T-cell (primary cell): ENCODE measurements at regions of chr1 and their contacts with region 1.

Region 1: GRCh38 chr1:112849425-112850033 is 106.5 kb downstream of the SLC16A1 start:
- DNase-seq: no peak
- ATAC-seq: no peak
- H3K4me3 ChIP-seq: no peak overlapping the region
- H3K4me3 Mint-ChIP-seq: peak overlapping the region in 1 of 3 donors; percentile 52
- H3K27ac ChIP-seq: no peak overlapping the region
- H3K27ac Mint-ChIP-seq: no peak overlapping the region
- H3K4me1 ChIP-seq: peaks cover 0 to 9% of the 10 kb centered on the region in 2 experiments
- H3K4me1 Mint-ChIP-seq: peaks cover 0 to 2% (median 0%) of the 10 kb centered on the region in 3 donors
- H3K27me3 ChIP-seq: peaks cover 4 to 40% of the 10 kb centered on the region in 2 experiments
- H3K27me3 Mint-ChIP-seq: peaks cover 39 to 46% of the 10 kb centered on the region in 2 donors

Region 2: GRCh38 chr1:112809253-112809684 is 40.3 kb before region 1 on chr1:
- CTCF ChIA-PET with region 1: no interaction called
- POLR2A ChIA-PET with region 1: no interaction called
- DNase-seq: peak in 34 of 35 experiments; percentile 2 to 59 (median 38)
- ATAC-seq: peak; percentile 61 to 75 (median 64)
- H3K4me3 ChIP-seq: no peak overlapping the region
- H3K4me3 Mint-ChIP-seq: no peak overlapping the region
- H3K27ac ChIP-seq: no peak overlapping the region
- H3K27ac Mint-ChIP-seq: no peak overlapping the region
- H3K4me1 ChIP-seq: no peaks in the 10 kb centered on the region
- H3K4me1 Mint-ChIP-seq: no peaks in the 10 kb centered on the region
- H3K27me3 ChIP-seq: peaks cover 0 to 8% of the 10 kb centered on the region in 2 experiments
- H3K27me3 Mint-ChIP-seq: peaks cover 3 to 4% of the 10 kb centered on the region in 2 donors

Region 3: GRCh38 chr1:112868191-112868590 is 18.7 kb after region 1 on chr1:
- CTCF ChIA-PET with region 1: no interaction called
- POLR2A ChIA-PET with region 1: interaction called in 1 of 2 experiments, 15 read pairs
- DNase-seq: no peak
- ATAC-seq: no peak
- H3K4me3 ChIP-seq: no peak overlapping the region
- H3K4me3 Mint-ChIP-seq: no peak overlapping the region
- H3K27ac ChIP-seq: no peak overlapping the region
- H3K27ac Mint-ChIP-seq: no peak overlapping the region
- H3K4me1 ChIP-seq: no peaks in the 10 kb centered on the region
- H3K4me1 Mint-ChIP-seq: peaks cover 0 to 5% (median 5%) of the 10 kb centered on the region in 3 donors
- H3K27me3 ChIP-seq: no peaks in the 10 kb centered on the region
- H3K27me3 Mint-ChIP-seq: peaks cover 2 to 3% of the 10 kb centered on the region in 2 donors

Region 4: DNA sequence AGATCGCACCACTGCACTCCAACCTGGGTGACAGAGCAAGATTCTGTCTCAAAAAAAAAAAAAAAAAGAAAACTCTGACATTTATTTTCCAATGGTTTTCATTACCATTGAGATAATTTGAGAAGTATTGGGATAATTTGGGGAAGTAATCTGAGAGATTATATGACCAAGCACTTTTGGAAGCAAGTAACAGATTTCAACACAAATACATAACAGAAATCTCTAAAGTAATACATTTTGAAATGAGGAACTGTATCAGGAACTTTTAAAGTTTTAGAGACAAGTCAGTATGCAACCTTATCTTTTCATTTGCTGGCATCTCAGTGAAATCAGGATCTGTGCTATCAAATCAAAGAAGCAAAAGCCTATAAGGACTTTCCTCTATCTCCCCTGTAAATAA is 131.9 kb after region 1 on chr1:
- CTCF ChIA-PET with region 1: no interaction called
- POLR2A ChIA-PET with region 1: no interaction called
- DNase-seq: no peak
- ATAC-seq: no peak
- H3K4me3 ChIP-seq: no peak overlapping the region
- H3K4me3 Mint-ChIP-seq: no peak overlapping the region
- H3K27ac ChIP-seq: no peak overlapping the region
- H3K27ac Mint-ChIP-seq: no peak overlapping the region
- H3K4me1 ChIP-seq: no peaks in the 10 kb centered on the region
- H3K4me1 Mint-ChIP-seq: peaks cover 0 to 7% (median 0%) of the 10 kb centered on the region in 3 donors
- H3K27me3 ChIP-seq: no peaks in the 10 kb centered on the region
- H3K27me3 Mint-ChIP-seq: no peaks in the 10 kb centered on the region

Region 5: GRCh38 chr1:112991402-112992120 is 142.0 kb after region 1 on chr1:
- CTCF ChIA-PET with region 1: interaction called in 1 of 2 experiments, 10 read pairs
- POLR2A ChIA-PET with region 1: no interaction called
- DNase-seq: no peak
- ATAC-seq: no peak
- H3K4me3 ChIP-seq: no peak overlapping the region
- H3K4me3 Mint-ChIP-seq: no peak overlapping the region
- H3K27ac ChIP-seq: no peak overlapping the region
- H3K27ac Mint-ChIP-seq: no peak overlapping the region
- H3K4me1 ChIP-seq: no peaks in the 10 kb centered on the region
- H3K4me1 Mint-ChIP-seq: no peaks in the 10 kb centered on the region
- H3K27me3 ChIP-seq: no peaks in the 10 kb centered on the region
- H3K27me3 Mint-ChIP-seq: no peaks in the 10 kb centered on the region